Naive thymus-derived CD8-positive, alpha-beta T cell (primary cell): ENCODE measurements at regions of chr1 and their contacts with region 1.

Region 1: GRCh38 chr1:154442006-154442740 is 37.0 kb downstream of the IL6R start:
- DNase-seq: peak in 2 of 10 donors; percentile 15 to 21
- ATAC-seq: peak; percentile 28 to 50
- H3K4me3 Mint-ChIP-seq: peak overlapping the region; percentile 62 to 80 (median 73)
- H3K27ac Mint-ChIP-seq: peak overlapping the region; percentile 87 to 98 (median 94)
- H3K4me1 Mint-ChIP-seq: peaks cover 40 to 70% (median 65%) of the 10 kb centered on the region in 4 donors
- H3K27me3 Mint-ChIP-seq: peaks cover 0 to 4% (median 0%) of the 10 kb centered on the region in 5 donors

Region 2: GRCh38 chr1:154419620-154420571 is 22.3 kb before region 1 on chr1:
- POLR2A ChIA-PET with region 1: interaction called, 12 read pairs
- DNase-seq: peak in 6 of 10 donors; percentile 31 to 56 (median 33)
- ATAC-seq: peak; percentile 78 to 82
- H3K4me3 Mint-ChIP-seq: peak overlapping the region; percentile 54 to 88 (median 77)
- H3K27ac Mint-ChIP-seq: peak overlapping the region; percentile 85 to 99 (median 94)
- H3K4me1 Mint-ChIP-seq: peaks cover 43 to 90% (median 81%) of the 10 kb centered on the region in 4 donors
- H3K27me3 Mint-ChIP-seq: no peaks in the 10 kb centered on the region